Mammary epithelial cell (primary cell): ENCODE measurements at regions of chr11 and their contacts with region 1.

Region 1: DNA sequence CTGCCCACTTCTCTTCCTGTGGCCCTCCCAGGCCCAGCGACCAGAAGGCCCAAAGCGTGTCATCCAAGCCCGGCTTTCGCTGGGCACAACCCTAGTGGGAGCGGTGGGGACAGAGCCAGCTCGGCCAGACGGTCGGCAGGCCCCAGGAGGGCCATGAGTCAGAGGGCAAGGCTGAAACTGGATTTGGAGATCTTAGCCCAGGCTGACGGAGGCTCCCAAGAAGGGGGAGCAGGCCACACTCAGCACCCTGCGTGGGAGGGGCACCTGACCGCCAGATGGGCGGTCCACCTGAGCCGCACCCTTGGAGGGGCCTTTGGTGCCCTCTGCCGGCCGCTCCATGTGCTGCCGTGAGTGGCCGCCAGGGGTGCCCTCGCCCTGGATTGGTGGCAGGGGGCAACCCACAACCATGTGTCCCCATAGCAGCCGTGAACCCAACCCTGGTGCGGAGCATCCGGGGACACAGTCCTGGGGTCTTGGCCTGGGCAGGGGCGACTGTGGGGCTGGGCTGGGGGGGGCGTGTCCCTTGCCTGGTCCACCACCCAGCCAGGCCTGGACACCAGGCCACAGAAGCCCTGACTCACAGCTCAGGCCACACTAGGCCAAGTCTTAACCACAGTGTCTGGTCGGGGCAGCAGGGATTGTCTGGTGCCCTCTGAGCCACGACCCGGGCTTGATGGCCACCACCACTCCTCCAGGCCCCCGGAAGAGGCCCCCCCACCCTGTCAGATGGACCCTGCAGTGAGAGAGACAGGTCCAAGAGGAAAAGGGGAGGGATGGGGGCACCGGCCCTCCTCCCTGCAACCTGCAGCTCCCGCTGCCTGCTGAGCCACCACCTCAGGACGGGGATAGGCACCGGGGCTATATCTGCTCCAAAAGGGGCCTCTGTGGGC is 19.2 kb upstream of the TALDO1 start:
- DNase-seq: peak; percentile 94
- H3K4me3 ChIP-seq: no peak overlapping the region
- H3K27ac ChIP-seq: peak overlapping the region; percentile 55
- H3K4me1 ChIP-seq: peaks cover 51% of the 10 kb centered on the region
- H3K27me3 ChIP-seq: no peaks in the 10 kb centered on the region
- CTCF ChIP-seq: peak; percentile 86 to 100

Region 2: GRCh38 chr11:554824-555472 is 173.2 kb before region 1 on chr11:
- CTCF ChIA-PET with region 1: no interaction called
- dilution Hi-C with region 1: no loop called
- in situ Hi-C with region 1: no loop called
- intact Hi-C with region 1: loop called (anchors 5 kb)
- DNase-seq: peak; percentile 62
- H3K4me3 ChIP-seq: peak overlapping the region in 2 of 3 experiments; percentile 26 to 41
- H3K27ac ChIP-seq: no peak overlapping the region
- H3K4me1 ChIP-seq: peaks cover 9% of the 10 kb centered on the region
- H3K27me3 ChIP-seq: peaks cover 8% of the 10 kb centered on the region
- CTCF ChIP-seq: peak; percentile 36 to 64

Region 3: DNA sequence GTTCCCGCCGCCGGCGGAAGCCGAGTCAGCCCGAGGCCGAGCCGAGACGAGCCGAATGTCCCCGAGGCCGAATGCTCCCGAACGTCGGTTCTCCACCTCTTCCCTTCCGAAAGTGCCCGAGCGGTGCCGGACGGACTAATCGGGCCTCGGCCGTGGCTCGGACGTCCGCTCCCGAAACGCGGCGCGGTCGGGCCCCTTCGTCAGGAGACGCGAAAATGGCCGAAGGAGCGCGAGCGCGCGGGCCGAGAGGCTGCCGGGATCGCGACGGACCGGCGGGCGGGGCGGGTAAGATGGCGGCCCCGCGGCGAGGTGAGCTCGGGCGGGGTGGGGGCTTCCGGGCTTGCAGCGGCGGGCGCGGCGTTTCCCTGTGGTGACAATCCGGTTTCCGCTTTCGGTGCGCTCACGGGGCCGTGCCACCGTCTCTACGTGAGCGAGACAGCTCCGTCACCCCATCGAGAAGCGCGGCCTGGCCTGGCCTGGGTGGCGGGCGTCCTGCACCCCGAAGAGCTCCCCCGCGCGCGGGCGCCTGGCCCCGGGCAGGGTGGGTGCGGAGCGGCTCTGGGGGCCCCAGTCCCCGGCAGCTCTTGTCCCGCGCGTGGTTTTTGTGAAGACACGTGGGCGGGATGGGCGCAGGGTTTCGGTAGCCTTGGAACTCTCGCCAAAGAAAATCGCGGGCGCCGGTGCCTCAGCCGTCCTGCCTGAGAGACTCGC is 32.4 kb before region 1 on chr11 and contains the start of gene TMEM80:
- CTCF ChIA-PET with region 1: interaction called, 3 read pairs
- dilution Hi-C with region 1: no loop called
- in situ Hi-C with region 1: no loop called
- intact Hi-C with region 1: loop called (anchors 1 kb)
- DNase-seq: peak; percentile 97
- H3K4me3 ChIP-seq: peak within 1 kb of the TSS; percentile 61 to 76 (median 68)
- H3K27ac ChIP-seq: peak within 1 kb of the TSS; percentile 97
- H3K4me1 ChIP-seq: peaks cover 50% of the 10 kb centered on the region
- H3K27me3 ChIP-seq: no peaks in the 10 kb centered on the region
- CTCF ChIP-seq: no peak
- total RNA-seq, gene TMEM80: 10.0 to 22.5 TPM

Region 4: GRCh38 chr11:765025-765801 is 37.1 kb after region 1 on chr11:
- CTCF ChIA-PET with region 1: interaction called, 4 read pairs
- dilution Hi-C with region 1: no loop called
- in situ Hi-C with region 1: no loop called
- intact Hi-C with region 1: loop called (anchors 1 kb)
- DNase-seq: peak; percentile 19
- H3K4me3 ChIP-seq: no peak overlapping the region
- H3K27ac ChIP-seq: no peak overlapping the region
- H3K4me1 ChIP-seq: peaks cover 20% of the 10 kb centered on the region
- H3K27me3 ChIP-seq: no peaks in the 10 kb centered on the region
- CTCF ChIP-seq: peak; percentile 36 to 62